BJ (cell line): ENCODE measurements at regions of chr13 and their contacts with region 1.

Region 1: GRCh38 chr13:46831588-46832194 is 34.7 kb upstream of the ESD start:
- DNase-seq: peak; percentile 1
- H3K4me3 ChIP-seq: no peak overlapping the region
- H3K27me3 ChIP-seq: no peaks in the 10 kb centered on the region
- CTCF ChIP-seq: peak; percentile 65

Region 2: GRCh38 chr13:46961719-46962118 is 130.0 kb after region 1 on chr13:
- CTCF ChIA-PET with region 1: no interaction called
- POLR2A ChIA-PET with region 1: no interaction called
- DNase-seq: peak; percentile 41
- H3K4me3 ChIP-seq: no peak overlapping the region
- H3K27me3 ChIP-seq: no peaks in the 10 kb centered on the region
- CTCF ChIP-seq: no peak

Region 3: GRCh38 chr13:47233734-47234133 is 402.0 kb after region 1 on chr13:
- CTCF ChIA-PET with region 1: no interaction called
- POLR2A ChIA-PET with region 1: no interaction called
- DNase-seq: no peak
- H3K4me3 ChIP-seq: no peak overlapping the region
- H3K27me3 ChIP-seq: no peaks in the 10 kb centered on the region
- CTCF ChIP-seq: no peak

Region 4: DNA sequence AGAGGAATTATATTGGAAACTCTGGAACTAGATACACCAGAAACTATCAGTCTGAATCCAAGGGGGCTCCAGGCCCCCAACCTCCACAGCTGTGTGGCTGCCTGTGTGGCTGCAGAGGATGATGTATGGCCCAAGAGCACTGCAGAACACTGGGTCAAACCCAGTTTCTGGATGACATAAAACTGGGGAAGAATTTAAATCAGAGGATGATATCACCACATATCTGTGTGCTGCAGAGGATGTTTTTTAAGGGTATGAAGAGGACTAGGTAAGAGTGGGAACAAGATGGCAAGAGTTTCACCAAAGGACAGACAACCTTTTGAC is 942.9 kb after region 1 on chr13:
- CTCF ChIA-PET with region 1: interaction called, 24 read pairs
- POLR2A ChIA-PET with region 1: no interaction called
- DNase-seq: no peak
- H3K4me3 ChIP-seq: no peak overlapping the region
- H3K27me3 ChIP-seq: peaks cover 4% of the 10 kb centered on the region; the same call in 1 of the 2 replicates
- CTCF ChIP-seq: no peak